ENCODE measurements at regions of chr1 and their contacts with region 1.

Region 1: GRCh38 chr1:9196129-9197040 is 38.2 kb upstream of the H6PD start:
- DNase-seq: no peak
- ATAC-seq: peak; percentile 78
- H3K4me3 ChIP-seq: peak overlapping the region in 1 of 2 experiments; percentile 15; a peak in 1 of 4 replicates
- H3K27ac ChIP-seq: no peak overlapping the region; the same call in 1 of the 2 replicates
- H3K4me1 ChIP-seq: peaks cover 16% of the 10 kb centered on the region
- H3K27me3 ChIP-seq: no peaks in the 10 kb centered on the region
- CTCF ChIP-seq: peak; percentile 93

Region 2: DNA sequence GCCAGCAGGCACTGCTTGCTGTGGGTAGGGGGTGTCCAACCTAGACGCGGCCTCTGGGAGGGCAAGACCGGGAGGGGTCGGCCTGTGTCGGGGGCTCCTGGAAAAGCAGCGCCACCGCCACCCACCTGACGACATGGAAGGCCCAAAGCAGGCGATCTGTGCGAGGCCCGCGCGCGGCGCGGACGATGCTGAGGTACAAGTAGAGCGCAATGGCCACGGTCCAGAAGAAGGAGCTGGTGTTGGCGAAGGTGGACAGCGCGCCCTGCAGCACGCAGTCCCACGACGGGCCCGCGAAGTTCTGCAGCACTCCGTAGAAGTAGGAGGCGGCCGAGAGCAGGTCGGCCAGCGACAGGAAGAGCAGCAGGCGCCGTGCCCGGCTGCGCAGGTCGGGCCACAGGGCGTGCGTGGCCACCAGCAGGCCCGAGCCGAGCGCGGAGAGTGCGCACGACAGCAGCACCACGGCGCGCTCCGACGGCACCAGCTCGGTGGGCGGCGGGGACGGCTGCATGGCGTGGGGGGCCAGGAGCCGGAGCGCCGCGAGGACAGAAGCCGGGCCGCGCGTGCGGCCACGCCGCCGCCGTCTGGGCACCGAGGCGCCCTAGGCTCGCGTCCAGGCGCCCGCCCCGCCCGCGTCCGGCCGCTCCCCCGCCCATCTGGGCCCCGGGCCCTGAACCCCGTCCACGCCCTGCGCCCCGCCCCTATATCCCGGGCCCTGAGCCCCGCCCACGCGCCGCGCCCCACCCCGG is 67.7 kb before region 1 on chr1 and contains the start of gene GPR157:
- CTCF ChIA-PET with region 1: no interaction called
- POLR2A ChIA-PET with region 1: no interaction called
- in situ Hi-C with region 1: no loop called
- intact Hi-C with region 1: loop called (anchors 5 kb)
- DNase-seq: no peak
- ATAC-seq: peak; percentile 89
- H3K4me3 ChIP-seq: peak within 1 kb of the TSS; percentile 69 to 85
- H3K27ac ChIP-seq: peak within 1 kb of the TSS; percentile 81
- H3K4me1 ChIP-seq: peaks cover 10% of the 10 kb centered on the region
- H3K27me3 ChIP-seq: no peaks in the 10 kb centered on the region
- CTCF ChIP-seq: no peak
- total RNA-seq, gene GPR157: 19.8 TPM